Heart right ventricle (tissue), 16 donors: ENCODE measurements at regions of chr5 and their contacts with region 1.

Region 1: GRCh38 chr5:151740336-151740942 is 18.0 kb downstream of the ATOX1 start:
- DNase-seq: peak; percentile 48 to 70
- ATAC-seq: peak; percentile 80 to 90 (median 84)
- H3K4me3 ChIP-seq: peak overlapping the region in 4 of 10 donors; percentile 12 to 29 (median 23)
- H3K27ac ChIP-seq: peak overlapping the region in 9 of 10 donors; percentile 38 to 84 (median 64)
- H3K4me1 ChIP-seq: peaks cover 0 to 53% (median 23%) of the 10 kb centered on the region in 9 donors
- H3K27me3 ChIP-seq: no peaks in the 10 kb centered on the region
- CTCF ChIP-seq: peak; percentile 83 to 94 (median 91)

Region 2: GRCh38 chr5:151523335-151523734 is 217.1 kb before region 1 on chr5:
- intact Hi-C with region 1: loop called in 2 of 10 experiments (anchors 10 kb)
- DNase-seq: no peak
- ATAC-seq: peak in 1 of 8 donors; percentile 11
- H3K4me3 ChIP-seq: no peak overlapping the region
- H3K27ac ChIP-seq: no peak overlapping the region
- H3K4me1 ChIP-seq: peaks cover 0 to 4% (median 0%) of the 10 kb centered on the region in 9 donors
- H3K27me3 ChIP-seq: no peaks in the 10 kb centered on the region
- CTCF ChIP-seq: peak in 7 of 9 donors; percentile 17 to 55 (median 28)

Region 3: DNA sequence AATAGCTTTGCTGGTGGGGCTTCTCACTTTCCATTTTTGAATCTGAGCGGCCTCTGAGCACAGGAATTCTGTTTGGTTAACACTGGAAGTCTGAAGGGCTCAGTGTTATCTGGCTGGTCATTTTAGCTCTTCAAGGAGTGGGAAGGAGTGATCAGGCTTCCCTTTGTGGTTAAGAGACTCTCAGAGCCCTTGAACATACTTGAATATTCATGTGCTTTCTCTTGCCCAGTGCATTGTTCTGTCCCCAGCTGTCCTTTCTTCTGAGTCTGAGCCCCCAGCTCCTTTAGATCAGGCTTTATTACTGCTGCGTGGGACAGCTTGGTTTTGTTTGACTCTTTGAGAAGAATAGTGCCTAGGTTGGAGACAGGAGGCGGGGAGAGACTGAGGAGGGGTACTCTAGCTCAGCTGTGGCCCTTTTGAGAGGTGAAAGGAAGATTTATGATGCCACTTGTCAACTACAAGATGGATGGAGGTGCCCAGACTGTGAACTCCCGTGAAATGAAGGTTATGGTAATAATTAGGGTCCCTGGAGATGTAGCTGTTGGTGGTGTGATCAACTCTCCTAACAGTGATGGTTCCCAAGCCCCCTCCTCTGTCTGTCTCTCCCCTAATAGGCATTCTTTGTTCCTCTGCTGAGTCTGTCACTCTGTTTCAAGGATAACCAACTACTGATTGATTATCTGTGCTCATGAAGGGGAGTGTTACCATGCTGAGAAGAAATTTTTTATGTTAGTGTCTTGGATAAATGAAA is 267.3 kb after region 1 on chr5:
- intact Hi-C with region 1: no loop called
- DNase-seq: no peak
- ATAC-seq: no peak
- H3K4me3 ChIP-seq: no peak overlapping the region
- H3K27ac ChIP-seq: no peak overlapping the region
- H3K4me1 ChIP-seq: no peaks in the 10 kb centered on the region
- H3K27me3 ChIP-seq: no peaks in the 10 kb centered on the region
- CTCF ChIP-seq: no peak